Activated CD8-positive, alpha-beta T cell treated with anti-CD3 and anti-CD28 coated beads, Interleukin-2, amount 10 ng/mL, durations not matched to agents 7 days and 5 days (primary cell): ENCODE measurements at regions of chr11 and their contacts with region 1.

Region 1: DNA sequence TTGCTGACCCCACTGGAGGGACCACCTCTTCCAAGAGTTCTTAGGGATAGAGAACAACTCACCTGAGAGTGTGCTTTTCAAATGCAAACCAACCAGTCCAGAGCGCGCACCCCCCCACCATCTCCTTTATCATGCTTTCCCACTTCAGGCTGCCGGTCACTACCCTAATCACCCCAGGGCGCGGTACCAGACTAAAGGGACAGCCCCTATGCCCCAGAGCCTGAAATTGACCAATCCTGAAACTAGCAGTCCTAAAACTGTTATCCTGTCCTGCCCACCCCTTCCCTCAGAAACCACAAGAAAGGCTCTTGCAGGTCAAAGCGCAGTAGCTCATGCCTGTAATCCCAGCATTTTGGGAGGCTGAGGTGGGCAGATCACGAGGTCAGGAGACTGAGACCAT is 37.0 kb downstream of the NEAT1 start:
- DNase-seq: no peak
- ATAC-seq: no peak
- H3K4me3 Mint-ChIP-seq: no peak overlapping the region
- H3K27ac Mint-ChIP-seq: no peak overlapping the region
- H3K4me1 Mint-ChIP-seq: peaks cover 23% of the 10 kb centered on the region
- H3K27me3 Mint-ChIP-seq: no peaks in the 10 kb centered on the region

Region 2: GRCh38 chr11:65382033-65382807 is 77.3 kb before region 1 on chr11 and contains the start of gene SLC25A45:
- CTCF ChIA-PET with region 1: no interaction called
- POLR2A ChIA-PET with region 1: no interaction called
- DNase-seq: peak; percentile 92
- ATAC-seq: peak; percentile 87
- H3K4me3 Mint-ChIP-seq: peak within 1 kb of the TSS; percentile 83
- H3K27ac Mint-ChIP-seq: peak within 1 kb of the TSS; percentile 99
- H3K4me1 Mint-ChIP-seq: peaks cover 47% of the 10 kb centered on the region
- H3K27me3 Mint-ChIP-seq: no peaks in the 10 kb centered on the region
- total RNA-seq, gene SLC25A45: 24.5 to 28.2 TPM

Region 3: GRCh38 chr11:65440831-65441499 is 18.6 kb before region 1 on chr11:
- CTCF ChIA-PET with region 1: no interaction called
- POLR2A ChIA-PET with region 1: interaction called, 15 read pairs
- DNase-seq: no peak
- ATAC-seq: peak; percentile 10
- H3K4me3 Mint-ChIP-seq: peak overlapping the region; percentile 45
- H3K27ac Mint-ChIP-seq: peak overlapping the region; percentile 86
- H3K4me1 Mint-ChIP-seq: peaks cover 60% of the 10 kb centered on the region
- H3K27me3 Mint-ChIP-seq: no peaks in the 10 kb centered on the region

Region 4: DNA sequence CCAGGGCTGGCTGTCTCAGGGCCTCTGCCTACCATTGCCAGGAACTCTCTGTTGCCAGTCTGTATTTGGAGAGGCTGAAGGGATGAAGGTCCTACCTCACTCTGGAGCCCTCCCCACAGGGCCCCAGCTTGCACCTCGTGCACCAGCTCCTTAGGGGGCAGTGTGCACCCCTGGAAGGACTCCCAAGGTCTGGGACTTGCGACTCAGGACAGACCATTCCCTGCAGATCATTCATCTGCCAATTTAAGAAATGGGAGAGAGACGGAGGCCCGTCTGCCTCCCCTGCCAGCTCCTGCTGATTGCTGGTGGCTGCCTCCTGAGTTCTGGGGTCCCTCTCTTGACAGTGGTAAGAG is 11.8 kb after region 1 on chr11:
- CTCF ChIA-PET with region 1: interaction called, 13 read pairs
- POLR2A ChIA-PET with region 1: interaction called, 4 read pairs
- DNase-seq: no peak
- ATAC-seq: no peak
- H3K4me3 Mint-ChIP-seq: peak overlapping the region; percentile 12
- H3K27ac Mint-ChIP-seq: peak overlapping the region; percentile 94
- H3K4me1 Mint-ChIP-seq: peaks cover 31% of the 10 kb centered on the region
- H3K27me3 Mint-ChIP-seq: no peaks in the 10 kb centered on the region

Region 5: GRCh38 chr11:65516135-65516935 is 56.8 kb after region 1 on chr11:
- CTCF ChIA-PET with region 1: no interaction called
- POLR2A ChIA-PET with region 1: no interaction called
- DNase-seq: no peak
- ATAC-seq: peak; percentile 62
- H3K4me3 Mint-ChIP-seq: no peak overlapping the region
- H3K27ac Mint-ChIP-seq: peak overlapping the region; percentile 32
- H3K4me1 Mint-ChIP-seq: peaks cover 10% of the 10 kb centered on the region
- H3K27me3 Mint-ChIP-seq: no peaks in the 10 kb centered on the region

Region 6: DNA sequence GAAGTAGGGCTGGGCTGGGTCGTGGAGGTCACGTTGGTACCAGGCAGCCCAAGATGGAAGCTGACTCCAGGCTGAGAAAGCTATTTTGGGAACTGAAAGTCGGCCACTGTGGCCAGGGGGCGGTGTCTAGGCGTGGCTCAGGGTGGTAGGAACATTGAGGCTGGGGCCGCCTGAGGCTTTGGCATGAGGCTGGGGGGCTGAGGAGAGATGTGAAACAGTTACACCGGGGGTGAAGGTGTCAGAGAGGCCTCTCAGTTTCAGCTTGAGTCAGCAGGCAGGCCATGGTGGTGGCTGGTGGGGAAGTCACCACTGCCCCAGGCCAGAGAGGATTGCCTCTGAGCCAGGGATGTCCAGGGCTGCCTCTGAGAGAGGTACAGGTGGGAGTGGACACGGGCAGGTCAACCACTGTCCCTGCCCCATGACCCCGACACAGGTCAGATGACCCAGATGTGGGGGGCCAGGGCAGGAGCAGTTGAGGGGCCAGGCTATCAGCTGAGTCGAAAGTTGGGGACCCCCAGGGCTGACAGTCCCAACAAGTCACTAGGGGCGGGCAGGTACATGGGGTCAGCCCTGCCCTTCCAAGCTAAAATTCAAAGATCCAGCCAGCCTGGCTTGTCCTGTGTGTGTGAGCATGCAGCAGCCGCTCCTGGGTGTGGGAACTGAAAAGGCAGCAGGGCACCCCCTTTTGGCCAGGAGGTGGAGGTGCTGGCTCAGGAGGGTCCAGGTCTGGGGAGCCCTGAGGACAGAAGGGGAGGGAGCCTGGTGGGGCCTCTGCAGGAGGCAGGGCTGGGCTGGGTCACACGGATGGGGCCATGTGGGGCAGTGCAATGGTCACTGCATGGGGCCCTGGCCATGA is 128.9 kb after region 1 on chr11:
- CTCF ChIA-PET with region 1: no interaction called
- POLR2A ChIA-PET with region 1: no interaction called
- DNase-seq: peak; percentile 86
- ATAC-seq: peak; percentile 89
- H3K4me3 Mint-ChIP-seq: peak overlapping the region; percentile 55
- H3K27ac Mint-ChIP-seq: peak overlapping the region; percentile 94
- H3K4me1 Mint-ChIP-seq: peaks cover 48% of the 10 kb centered on the region
- H3K27me3 Mint-ChIP-seq: no peaks in the 10 kb centered on the region